Dendritic cell treated with granulocyte-macrophage colony-stimulating factor and Interleukin-4, amounts not matched to agents 40 ng/mL and 50 ng/mL, for 4 days (primary cell): ENCODE measurements at regions of chr6 and their contacts with region 1.

Region 1: DNA sequence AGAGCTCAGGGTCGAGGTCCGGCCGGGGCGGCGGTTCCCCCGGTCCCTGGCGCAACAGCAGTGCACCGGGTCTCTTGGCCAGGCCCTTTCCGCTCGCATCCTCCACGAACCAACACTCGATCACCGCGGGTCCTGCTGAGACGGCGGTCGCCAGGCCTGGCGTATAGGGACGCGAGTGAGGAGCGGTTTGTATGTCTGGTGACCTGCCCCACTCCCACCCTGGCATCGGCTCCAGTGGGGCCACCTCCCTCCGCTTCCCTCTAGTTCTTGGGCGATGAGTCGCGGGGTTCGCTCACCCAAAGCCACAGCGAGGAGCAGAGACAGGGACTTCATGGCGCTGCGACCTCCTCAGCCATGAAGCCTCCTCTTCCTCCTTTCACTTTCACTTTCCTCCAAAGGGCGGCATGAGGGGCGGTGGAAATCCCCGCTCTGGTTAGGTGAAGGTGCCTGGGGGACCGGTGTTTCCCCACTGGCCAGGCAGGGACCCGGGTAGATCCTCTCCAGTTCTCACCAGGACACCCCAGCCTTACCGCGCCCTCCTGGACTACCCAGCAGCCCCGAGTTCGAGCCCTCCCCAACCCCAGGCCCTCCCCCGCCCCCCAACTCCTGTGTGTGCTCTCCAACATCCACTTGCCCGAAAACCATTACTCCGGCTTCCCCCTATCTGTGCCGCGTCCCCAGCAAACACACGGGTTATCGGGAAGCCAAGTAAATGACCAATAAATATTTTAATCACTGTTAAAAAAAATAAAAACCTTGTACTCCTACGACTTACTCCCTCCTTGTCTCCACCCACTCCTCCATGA is at the start of gene TAPBP:
- H3K4me3 Mint-ChIP-seq: peak within 1 kb of the TSS; percentile 100
- H3K27ac Mint-ChIP-seq: peak within 1 kb of the TSS; percentile 98
- H3K4me1 Mint-ChIP-seq: peaks cover 62% of the 10 kb centered on the region
- H3K27me3 Mint-ChIP-seq: no peaks in the 10 kb centered on the region

Region 2: GRCh38 chr6:33344701-33345697 is 31.1 kb after region 1 on chr6:
- intact Hi-C with region 1: loop called (anchors 5 kb)
- H3K4me3 Mint-ChIP-seq: peak overlapping the region; percentile 14
- H3K27ac Mint-ChIP-seq: no peak overlapping the region
- H3K4me1 Mint-ChIP-seq: peaks cover 7% of the 10 kb centered on the region
- H3K27me3 Mint-ChIP-seq: peaks cover 2% of the 10 kb centered on the region